ENCODE measurements at regions of chr9 and their contacts with region 1.

Region 1: DNA sequence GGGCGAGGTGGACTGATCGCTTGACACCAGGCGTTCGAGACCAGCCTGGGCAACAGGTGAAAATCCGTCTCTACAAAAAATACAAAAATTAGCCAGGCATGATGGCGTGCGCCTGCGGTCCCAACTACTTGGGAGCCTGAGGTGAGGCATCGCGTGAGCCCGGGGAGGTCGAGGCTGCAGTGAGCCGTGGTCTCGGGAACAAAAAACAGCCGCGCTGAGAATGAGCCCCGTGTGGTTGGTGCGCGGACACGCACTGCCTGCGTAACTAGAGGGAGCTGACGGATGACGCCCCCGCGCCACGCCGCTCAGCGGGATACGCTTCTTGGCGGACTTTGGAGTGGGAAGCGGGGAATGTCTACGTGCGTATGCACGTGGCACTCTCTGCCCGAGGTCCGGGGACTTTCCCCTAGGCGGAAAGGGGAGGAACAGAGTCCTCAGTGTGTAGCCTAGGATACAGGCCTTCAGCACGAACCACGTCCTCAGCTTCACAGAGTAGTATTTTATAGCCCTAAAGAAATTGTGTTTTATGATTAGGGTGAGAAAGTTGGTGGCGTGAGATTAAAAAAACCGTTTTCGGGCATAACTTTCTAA is at the start of gene RMRP:
- DNase-seq: peak; percentile 96 to 98
- ATAC-seq: peak; percentile 94 to 97 (median 96)
- H3K4me3 ChIP-seq: peak within 1 kb of the TSS; percentile 73 to 98 (median 88)
- H3K27ac ChIP-seq: peak within 1 kb of the TSS; percentile 95 to 99 (median 98)
- H3K4me1 ChIP-seq: peaks cover 0 to 56% (median 34%) of the 10 kb centered on the region in 9 donors
- H3K27me3 ChIP-seq: no peaks in the 10 kb centered on the region
- CTCF ChIP-seq: peak in 7 of 9 donors; percentile 14 to 59 (median 46)
- total RNA-seq, gene RMRP: 3,879 to 14,997 (median 5,788) TPM

Region 2: DNA sequence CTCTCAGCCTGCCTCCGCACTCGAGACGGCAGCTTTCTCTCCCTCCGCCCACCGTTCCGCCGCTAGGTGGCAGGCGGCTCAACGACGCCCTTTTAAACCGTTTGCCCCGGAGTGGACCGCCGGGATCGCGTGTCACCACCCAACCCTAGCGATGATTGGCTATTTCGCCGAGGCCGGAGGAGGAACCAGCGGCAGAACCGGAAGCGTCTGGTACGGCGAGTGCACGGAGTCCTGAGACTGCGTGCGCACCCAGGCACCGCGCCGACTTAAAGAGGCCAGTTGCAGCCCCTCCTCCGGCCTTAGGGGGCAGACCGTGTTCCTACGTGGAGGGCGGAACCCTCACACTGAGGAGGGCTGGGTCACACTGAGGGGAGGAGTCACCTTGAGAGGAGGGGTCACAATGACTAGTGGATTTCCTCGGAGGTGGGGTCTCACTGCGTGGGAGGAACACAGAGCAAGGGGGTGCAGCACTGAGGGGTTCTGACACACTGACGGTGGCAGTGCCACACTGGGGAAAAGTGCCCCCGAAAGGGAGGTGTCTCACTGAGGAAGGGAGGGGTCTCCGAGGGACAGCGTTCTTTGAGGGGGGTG is 53.6 kb before region 1 on chr9:
- intact Hi-C with region 1: loop called in 1 of 10 experiments (anchors 10 kb)
- DNase-seq: peak; percentile 99 to 100
- ATAC-seq: peak; percentile 92 to 98 (median 96)
- H3K4me3 ChIP-seq: peak overlapping the region; percentile 56 to 93 (median 73)
- H3K27ac ChIP-seq: peak overlapping the region; percentile 72 to 95 (median 92)
- H3K4me1 ChIP-seq: peaks cover 0 to 38% (median 25%) of the 10 kb centered on the region in 9 donors
- H3K27me3 ChIP-seq: no peaks in the 10 kb centered on the region
- CTCF ChIP-seq: peak; percentile 86 to 99 (median 95)

Region 3: GRCh38 chr9:35732122-35732799 is 74.6 kb after region 1 on chr9 and contains the starts of genes CREB3 and TLN1:
- intact Hi-C with region 1: loop called in 9 of 10 experiments (anchors 1 to 10 kb)
- DNase-seq: peak; percentile 97 to 98
- ATAC-seq: peak; percentile 87 to 94 (median 92)
- H3K4me3 ChIP-seq: peak within 1 kb of the TSS; percentile 65 to 98 (median 80)
- H3K27ac ChIP-seq: peak within 1 kb of the TSS; percentile 93 to 99 (median 98)
- H3K4me1 ChIP-seq: peaks cover 43 to 76% (median 56%) of the 10 kb centered on the region in 9 donors
- H3K27me3 ChIP-seq: no peaks in the 10 kb centered on the region
- CTCF ChIP-seq: peak in 3 of 9 donors; percentile 6 to 26 (median 13)
- total RNA-seq, gene CREB3: 16.2 to 29.5 (median 20.2) TPM
- total RNA-seq, gene TLN1: 206 to 323 (median 238) TPM

Region 4: DNA sequence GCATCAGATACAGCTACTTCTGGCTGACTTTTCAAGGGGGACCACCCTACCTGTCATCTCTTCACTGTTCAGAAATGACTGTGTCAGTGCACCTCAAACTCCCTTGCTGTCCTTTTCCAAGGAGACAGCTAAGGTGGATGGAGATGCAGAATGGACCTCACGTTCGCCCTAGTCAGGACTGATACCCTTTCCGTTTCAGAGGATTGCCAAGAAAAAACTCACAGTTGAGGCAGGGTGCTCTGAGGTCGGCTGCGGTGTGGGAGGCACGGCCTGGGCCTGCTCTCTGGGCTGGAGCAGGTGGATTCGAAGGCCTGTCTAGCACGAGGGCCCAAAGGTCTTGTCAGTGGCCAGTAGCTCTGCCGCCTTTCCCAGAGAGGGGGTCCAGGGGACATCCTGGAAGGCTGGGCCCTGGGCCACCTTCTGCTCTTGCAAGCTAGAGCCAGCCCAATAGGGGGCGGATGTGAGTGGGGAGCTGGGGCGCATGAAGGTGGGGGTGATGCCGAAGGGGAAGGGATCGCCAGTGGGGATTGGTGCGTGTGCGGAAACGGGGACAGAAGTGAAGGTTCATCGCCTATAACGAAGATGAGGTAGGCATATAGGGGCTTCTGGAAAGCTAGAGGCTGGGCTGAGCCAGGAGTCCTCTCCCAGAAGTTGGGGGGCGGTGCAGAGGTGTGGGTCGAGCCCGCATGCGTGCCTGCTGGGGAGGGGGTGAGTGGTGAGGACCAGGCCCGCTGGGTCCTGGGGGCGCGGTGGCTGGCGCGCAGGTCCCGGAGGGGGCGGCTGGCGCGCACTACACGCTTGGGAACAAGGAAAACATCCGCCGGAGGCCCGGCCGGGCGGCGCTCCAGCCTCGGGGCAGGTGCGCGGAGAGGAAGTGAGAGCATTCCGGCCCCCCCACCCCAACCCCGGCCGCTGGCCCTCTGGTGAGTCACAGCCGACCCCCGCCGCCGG is 98.9 kb after region 1 on chr9:
- intact Hi-C with region 1: no loop called
- DNase-seq: peak; percentile 76 to 85
- ATAC-seq: peak; percentile 81 to 91 (median 86)
- H3K4me3 ChIP-seq: peak overlapping the region; percentile 44 to 73 (median 60)
- H3K27ac ChIP-seq: peak overlapping the region; percentile 81 to 95 (median 91)
- H3K4me1 ChIP-seq: peaks cover 0 to 55% (median 29%) of the 10 kb centered on the region in 9 donors
- H3K27me3 ChIP-seq: no peaks in the 10 kb centered on the region
- CTCF ChIP-seq: peak; percentile 20 to 67 (median 60)

Region 5: GRCh38 chr9:35814841-35815543 is 157.4 kb after region 1 on chr9 and contains the start of gene HINT2:
- intact Hi-C with region 1: loop called in 4 of 10 experiments (anchors 1 to 10 kb)
- DNase-seq: peak; percentile 94 to 97
- ATAC-seq: peak; percentile 92 to 96 (median 95)
- H3K4me3 ChIP-seq: peak within 1 kb of the TSS; percentile 81 to 99 (median 94)
- H3K27ac ChIP-seq: peak within 1 kb of the TSS; percentile 97 to 100 (median 99)
- H3K4me1 ChIP-seq: peaks cover 0 to 43% (median 35%) of the 10 kb centered on the region in 9 donors
- H3K27me3 ChIP-seq: no peaks in the 10 kb centered on the region
- CTCF ChIP-seq: no peak
- total RNA-seq, gene HINT2: 56.8 to 83.1 (median 76.7) TPM

Region 6: GRCh38 chr9:35882263-35882848 is 224.7 kb after region 1 on chr9:
- intact Hi-C with region 1: loop called in 1 of 10 experiments (anchors 5 kb)
- DNase-seq: peak; percentile 84 to 87
- ATAC-seq: peak in 7 of 8 donors; percentile 81 to 92 (median 85)
- H3K4me3 ChIP-seq: no peak overlapping the region
- H3K27ac ChIP-seq: no peak overlapping the region
- H3K4me1 ChIP-seq: no peaks in the 10 kb centered on the region
- H3K27me3 ChIP-seq: peaks cover 0 to 9% (median 0%) of the 10 kb centered on the region in 7 donors
- CTCF ChIP-seq: peak; percentile 89 to 100 (median 98)